WTC11 (cell line): ENCODE measurements at regions of chr6 and their contacts with region 1.

Region 1: DNA sequence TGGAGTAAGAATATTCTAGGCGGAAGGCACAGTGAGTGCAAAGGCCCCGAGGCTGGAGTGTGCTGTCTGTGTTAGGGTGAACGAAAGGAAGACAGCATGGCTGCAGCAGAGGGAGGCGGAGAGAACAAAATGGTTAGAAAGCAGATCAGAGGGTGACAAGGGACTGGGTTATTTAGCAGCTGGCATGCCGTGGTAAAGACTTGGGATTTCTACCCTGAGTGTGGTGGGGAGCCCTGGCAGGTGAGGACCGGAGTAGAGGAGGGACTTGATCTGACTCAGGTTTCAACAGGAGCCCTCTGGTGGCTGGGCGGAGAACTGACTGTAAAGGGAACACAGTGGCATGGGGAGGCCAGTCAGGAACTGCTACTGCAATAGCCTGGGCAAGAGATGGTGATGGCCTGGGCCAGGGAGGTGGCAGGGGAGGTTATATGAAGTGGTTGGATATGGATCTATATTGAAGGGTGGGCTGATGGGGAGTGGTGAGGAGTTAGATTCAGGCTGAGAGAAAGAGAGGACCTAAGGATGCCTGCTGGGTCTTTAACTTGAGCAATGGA is 38.0 kb downstream of the PIM1 start:
- DNase-seq: peak; percentile 97
- ATAC-seq: peak; percentile 94
- H3K4me3 Mint-ChIP-seq: no peak overlapping the region
- H3K27ac Mint-ChIP-seq: no peak overlapping the region
- H3K4me1 Mint-ChIP-seq: peaks cover 5% of the 10 kb centered on the region; the same call in 1 of the 2 replicates
- H3K27me3 Mint-ChIP-seq: peaks cover 3% of the 10 kb centered on the region; the same call in 1 of the 2 replicates
- CTCF ChIP-seq: peak; percentile 70

Region 2: GRCh38 chr6:36979347-36979742 is 228.6 kb before region 1 on chr6:
- CTCF ChIA-PET with region 1: interaction called, 10 read pairs
- POLR2A ChIA-PET with region 1: no interaction called
- DNase-seq: no peak
- ATAC-seq: no peak
- H3K4me3 Mint-ChIP-seq: no peak overlapping the region
- H3K27ac Mint-ChIP-seq: peak overlapping the region; percentile 37
- H3K4me1 Mint-ChIP-seq: peaks cover 21% of the 10 kb centered on the region
- H3K27me3 Mint-ChIP-seq: no peaks in the 10 kb centered on the region
- CTCF ChIP-seq: no peak

Region 3: DNA sequence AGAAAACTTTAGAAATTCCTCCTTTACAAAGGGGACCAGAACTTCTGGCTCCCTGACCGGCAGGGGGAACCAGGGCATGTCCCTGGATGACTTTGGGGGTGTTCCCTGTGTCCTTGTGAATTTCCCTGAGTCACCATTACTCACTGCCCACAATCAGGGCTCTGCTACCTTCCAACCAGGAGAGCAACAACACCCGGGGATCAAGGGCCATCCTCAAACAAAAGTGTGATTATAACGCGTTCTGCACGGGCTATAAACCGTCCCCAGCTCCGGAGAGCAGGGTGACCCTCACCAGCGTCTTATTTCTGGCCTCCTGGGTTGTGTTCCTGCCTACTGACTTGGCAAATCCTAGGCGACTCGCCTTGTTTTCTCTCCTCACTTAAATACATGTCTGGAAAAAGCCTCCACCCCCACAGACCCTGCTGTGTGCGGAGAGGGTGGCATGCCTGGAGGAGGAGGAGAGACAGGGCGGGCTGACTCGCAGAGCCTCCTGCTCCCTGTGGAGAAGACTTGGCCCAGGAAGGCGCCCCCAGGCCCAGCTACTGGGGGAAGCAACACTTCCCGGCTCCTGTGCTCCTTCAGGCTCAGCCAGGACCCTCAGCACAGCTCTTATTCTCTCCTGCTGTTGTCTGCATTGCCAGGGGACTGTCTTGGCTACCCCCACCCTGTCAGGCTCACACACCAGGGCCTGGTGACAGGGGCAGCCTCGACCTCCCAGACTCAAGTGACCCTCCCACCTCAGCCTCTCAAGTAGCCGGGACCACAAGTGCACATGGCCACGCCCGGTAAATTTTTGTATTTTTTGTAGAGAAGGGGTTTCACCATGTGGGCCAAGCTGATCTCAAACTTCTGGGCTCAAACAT is 148.4 kb before region 1 on chr6:
- CTCF ChIA-PET with region 1: interaction called, 22 read pairs
- POLR2A ChIA-PET with region 1: no interaction called
- DNase-seq: peak; percentile 73
- ATAC-seq: peak; percentile 72
- H3K4me3 Mint-ChIP-seq: peak overlapping the region; percentile 47
- H3K27ac Mint-ChIP-seq: peak overlapping the region; percentile 99
- H3K4me1 Mint-ChIP-seq: peaks cover 51% of the 10 kb centered on the region
- H3K27me3 Mint-ChIP-seq: no peaks in the 10 kb centered on the region
- CTCF ChIP-seq: 0 out of 2 replicates have a peak, but pooled peaks have one; percentile 21

Region 4: DNA sequence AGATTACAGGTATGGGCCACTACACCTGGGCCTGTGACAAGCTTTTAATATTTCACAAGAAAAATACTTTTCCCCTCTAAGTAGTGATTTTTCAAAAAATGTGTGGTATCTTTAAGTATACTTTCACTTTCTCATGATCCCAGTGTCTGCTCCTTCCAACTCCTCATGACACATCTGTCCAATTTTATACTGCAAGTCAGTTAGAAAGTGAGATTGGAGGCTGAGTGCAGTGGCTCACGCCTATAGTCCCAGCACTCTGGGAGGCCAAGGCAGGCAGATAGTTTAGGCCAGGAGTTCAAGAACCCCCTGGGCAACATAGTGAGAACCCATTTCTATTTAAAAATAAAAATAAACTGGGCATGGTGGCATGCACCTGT is 17.8 kb before region 1 on chr6:
- CTCF ChIA-PET with region 1: interaction called, 11 read pairs
- POLR2A ChIA-PET with region 1: interaction called, 3 read pairs
- DNase-seq: no peak
- ATAC-seq: no peak
- H3K4me3 Mint-ChIP-seq: no peak overlapping the region
- H3K27ac Mint-ChIP-seq: no peak overlapping the region
- H3K4me1 Mint-ChIP-seq: peaks cover 4% of the 10 kb centered on the region; the same call in 1 of the 2 replicates
- H3K27me3 Mint-ChIP-seq: no peaks in the 10 kb centered on the region
- CTCF ChIP-seq: no peak

Region 5: GRCh38 chr6:37314487-37315156 is 106.6 kb after region 1 on chr6:
- CTCF ChIA-PET with region 1: interaction called, 10 read pairs
- POLR2A ChIA-PET with region 1: no interaction called
- DNase-seq: peak; percentile 61
- ATAC-seq: peak; percentile 97
- H3K4me3 Mint-ChIP-seq: no peak overlapping the region
- H3K27ac Mint-ChIP-seq: peak overlapping the region; percentile 10; the same call in 1 of the 2 replicates
- H3K4me1 Mint-ChIP-seq: no peaks in the 10 kb centered on the region
- H3K27me3 Mint-ChIP-seq: no peaks in the 10 kb centered on the region
- CTCF ChIP-seq: peak; percentile 47